AG04450 (cell line): ENCODE measurements at regions of chr5 and their contacts with region 1.

Region 1: DNA sequence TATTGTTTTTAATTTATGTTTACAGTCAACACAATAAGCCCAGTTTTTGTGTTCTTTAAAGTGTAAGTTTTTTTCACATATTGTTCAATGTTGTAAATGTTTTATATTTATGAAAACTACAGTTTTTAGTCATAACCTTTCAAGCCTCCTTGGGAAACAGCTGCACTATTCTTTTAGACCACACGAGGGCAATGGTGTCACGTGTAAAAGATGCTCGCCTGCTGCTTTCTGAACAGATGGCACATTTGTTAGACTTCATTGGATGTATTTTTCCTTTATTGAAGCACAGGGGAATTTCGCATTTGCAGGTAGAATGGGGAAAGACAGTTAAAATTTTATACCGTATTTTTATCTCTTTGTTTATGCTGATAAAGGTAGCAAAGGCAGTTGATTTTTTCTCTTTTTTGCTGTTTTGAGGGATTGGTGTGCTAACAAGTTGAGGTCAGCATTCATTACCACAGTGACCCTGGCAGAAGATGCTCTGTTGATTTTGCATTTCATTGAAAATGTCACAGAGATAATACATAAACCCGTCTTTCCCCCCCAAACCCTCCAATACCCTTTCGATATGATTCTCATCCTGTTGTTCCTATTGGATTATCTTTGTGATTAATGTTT is 59.0 kb downstream of the MAT2B start:
- DNase-seq: peak; percentile 24
- H3K4me3 ChIP-seq: no peak overlapping the region
- H3K27ac ChIP-seq: no peak overlapping the region
- H3K27me3 ChIP-seq: no peaks in the 10 kb centered on the region
- CTCF ChIP-seq: peak; percentile 88

Region 2: DNA sequence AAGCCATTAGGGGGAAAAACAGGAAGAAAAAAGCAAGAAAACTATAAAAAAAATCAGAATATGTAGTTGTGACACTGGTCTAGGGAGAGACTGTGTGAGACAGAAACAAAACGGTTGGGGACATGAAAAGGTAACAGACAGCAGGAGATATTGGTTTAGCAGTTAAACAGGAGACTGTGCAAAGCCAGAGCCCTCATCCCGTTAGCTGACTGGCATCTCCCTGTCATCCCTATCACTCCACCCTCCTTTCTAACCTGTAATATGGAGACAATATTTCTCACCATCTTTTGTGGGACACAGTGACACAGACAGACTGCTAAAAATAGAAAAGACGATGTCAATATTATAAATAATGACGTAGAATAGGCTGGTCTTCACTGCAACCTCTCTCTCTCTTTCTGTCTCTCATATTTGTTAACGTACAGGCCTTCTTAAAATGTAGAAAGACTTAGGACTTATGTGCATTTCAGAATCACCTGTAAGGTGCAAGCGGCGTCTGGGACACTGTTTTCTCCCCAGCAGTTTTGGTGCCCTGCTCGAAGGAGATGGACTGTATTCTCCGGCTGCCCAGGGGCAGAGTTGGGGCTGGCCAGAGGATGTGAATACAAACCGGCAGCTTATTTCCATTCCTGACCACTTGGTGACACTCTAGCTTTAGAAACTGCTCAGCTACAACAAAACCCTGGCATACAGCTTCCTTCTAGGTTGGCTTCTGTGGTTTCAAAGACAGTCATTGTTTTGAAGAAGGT is 131.6 kb after region 1 on chr5:
- CTCF ChIA-PET with region 1: interaction called, 77 read pairs
- POLR2A ChIA-PET with region 1: no interaction called
- DNase-seq: peak; percentile 69
- H3K4me3 ChIP-seq: no peak overlapping the region
- H3K27ac ChIP-seq: no peak overlapping the region
- H3K27me3 ChIP-seq: no peaks in the 10 kb centered on the region
- CTCF ChIP-seq: peak; percentile 85

Region 3: GRCh38 chr5:164475339-164475977 is 911.0 kb after region 1 on chr5:
- CTCF ChIA-PET with region 1: interaction called, 13 read pairs
- POLR2A ChIA-PET with region 1: no interaction called
- DNase-seq: no peak
- H3K4me3 ChIP-seq: no peak overlapping the region
- H3K27ac ChIP-seq: no peak overlapping the region
- H3K27me3 ChIP-seq: no peaks in the 10 kb centered on the region
- CTCF ChIP-seq: peak; percentile 60